ENCODE measurements at regions of chr3 and their contacts with region 1.

Region 1: DNA sequence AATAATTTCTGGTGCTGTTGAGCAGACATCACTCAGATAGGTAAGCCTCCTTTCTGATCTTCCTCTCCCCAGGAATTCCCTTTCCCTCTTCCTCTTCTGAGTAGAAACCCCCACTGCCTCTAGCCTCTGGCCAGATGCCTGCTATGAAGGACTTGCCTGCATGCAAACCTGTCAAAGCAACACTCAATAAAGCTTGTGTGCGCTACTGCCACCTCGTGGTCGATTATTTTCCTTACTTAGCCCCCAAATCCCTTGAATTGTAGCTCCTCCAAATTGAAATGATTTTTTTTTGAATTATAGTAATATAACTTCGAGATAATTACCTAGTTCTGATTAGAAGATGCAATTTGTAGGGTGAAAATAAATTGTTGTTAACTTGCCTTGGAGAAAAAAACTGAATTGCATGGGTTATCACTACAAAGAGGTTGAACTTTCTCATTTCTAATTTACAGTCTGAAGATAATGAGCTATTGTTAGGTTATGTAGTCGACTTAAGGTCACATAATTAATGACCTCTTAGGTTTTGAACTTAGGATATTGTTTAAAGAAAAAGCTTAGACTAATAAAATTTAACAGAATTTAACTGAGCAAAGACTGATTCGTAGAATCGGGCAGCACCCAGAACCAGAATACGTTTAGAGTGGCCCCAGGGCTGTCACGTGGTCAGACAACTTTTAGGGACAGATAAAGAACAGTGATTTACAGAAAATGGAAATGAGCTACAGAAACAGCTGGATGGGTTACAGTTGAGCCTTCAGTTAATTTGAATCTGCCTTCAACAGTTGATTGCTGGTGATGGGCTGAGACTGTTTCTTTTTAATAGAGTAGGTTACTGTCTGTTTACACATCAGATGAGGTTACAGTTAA is 269.3 kb downstream of the ARPP21 start:
- DNase-seq: peak; percentile 39 to 95 (median 79)

Region 2: GRCh38 chr3:35677797-35678196 is 230.8 kb before region 1 on chr3:
- intact Hi-C with region 1: loop called (anchors 10 kb)
- DNase-seq: no peak

Region 3: DNA sequence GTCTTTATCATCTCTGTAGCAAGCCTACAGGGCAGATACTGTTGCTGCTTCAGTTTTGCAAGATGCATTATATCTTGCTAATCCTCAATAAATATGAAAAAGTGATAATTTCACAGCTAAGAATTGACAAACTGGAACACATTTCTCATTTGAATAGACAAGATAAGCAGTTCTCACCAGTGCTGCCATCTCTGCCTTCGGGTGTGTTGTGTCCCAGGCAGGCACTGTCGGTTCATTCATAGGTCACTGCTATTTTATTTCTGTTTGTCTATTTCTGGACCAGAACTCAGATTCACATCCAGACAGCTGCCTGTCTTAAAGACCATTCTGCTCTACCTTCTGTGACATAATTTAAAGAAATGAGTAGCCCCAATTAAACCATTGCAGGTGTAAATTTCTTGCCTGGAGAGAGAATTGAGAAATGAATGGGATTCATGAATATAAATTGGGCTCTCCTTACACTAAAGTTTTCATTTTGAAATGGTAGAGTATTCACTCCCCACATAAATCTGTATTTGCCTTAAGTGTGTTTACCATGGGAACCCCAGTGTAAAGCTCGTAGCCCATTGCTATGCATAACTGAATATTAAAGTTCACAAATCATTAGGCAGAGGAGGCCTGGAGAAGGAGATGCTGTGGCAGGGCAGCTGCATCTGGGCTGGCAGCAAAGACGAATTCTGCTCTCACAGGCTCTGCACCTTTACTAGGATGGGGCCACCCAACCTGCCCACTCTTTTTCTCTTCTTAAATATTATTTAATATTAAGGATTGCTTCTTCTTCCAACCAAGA is 119.4 kb before region 1 on chr3:
- intact Hi-C with region 1: no loop called
- DNase-seq: no peak

Region 4: GRCh38 chr3:36132214-36132613 is 223.6 kb after region 1 on chr3:
- intact Hi-C with region 1: no loop called
- DNase-seq: no peak